ENCODE measurements at regions of chr9 and their contacts with region 1.

Region 1: GRCh38 chr9:120985810-120986222 is 59.2 kb upstream of the TRAF1 start:
- DNase-seq: no peak
- H3K4me3 Mint-ChIP-seq: no peak overlapping the region
- H3K27ac Mint-ChIP-seq: no peak overlapping the region
- H3K4me1 Mint-ChIP-seq: peaks cover 2% of the 10 kb centered on the region
- H3K27me3 Mint-ChIP-seq: peaks cover 5% of the 10 kb centered on the region

Region 2: GRCh38 chr9:120965344-120966012 is 20.3 kb before region 1 on chr9:
- CTCF ChIA-PET with region 1: interaction called, 10 read pairs
- POLR2A ChIA-PET with region 1: interaction called, 3 read pairs
- DNase-seq: no peak
- H3K4me3 Mint-ChIP-seq: no peak overlapping the region
- H3K27ac Mint-ChIP-seq: no peak overlapping the region
- H3K4me1 Mint-ChIP-seq: no peaks in the 10 kb centered on the region
- H3K27me3 Mint-ChIP-seq: peaks cover 8% of the 10 kb centered on the region

Region 3: DNA sequence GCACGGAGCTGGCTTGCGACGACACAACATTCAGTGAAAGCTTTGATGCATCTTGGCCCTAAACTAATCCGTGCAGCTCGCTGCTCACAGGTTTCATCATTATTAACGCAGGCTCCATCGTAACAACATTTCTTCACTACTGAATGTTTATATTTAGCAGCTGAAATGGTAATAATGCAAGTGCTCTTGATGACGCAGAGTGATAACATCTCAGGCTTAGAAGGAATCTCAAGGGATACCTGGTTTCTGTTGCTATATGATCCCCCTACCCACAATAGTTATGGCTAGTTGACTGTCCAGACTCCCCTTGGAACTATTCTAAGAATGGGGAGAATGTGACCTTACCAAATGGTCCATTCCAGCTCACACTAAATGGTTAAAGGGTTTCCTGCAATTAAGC is 28.1 kb after region 1 on chr9:
- CTCF ChIA-PET with region 1: no interaction called
- POLR2A ChIA-PET with region 1: no interaction called
- DNase-seq: no peak
- H3K4me3 Mint-ChIP-seq: no peak overlapping the region
- H3K27ac Mint-ChIP-seq: no peak overlapping the region
- H3K4me1 Mint-ChIP-seq: no peaks in the 10 kb centered on the region
- H3K27me3 Mint-ChIP-seq: no peaks in the 10 kb centered on the region

Region 4: GRCh38 chr9:121048618-121049017 is 62.8 kb after region 1 on chr9:
- CTCF ChIA-PET with region 1: no interaction called
- POLR2A ChIA-PET with region 1: no interaction called
- DNase-seq: no peak
- H3K4me3 Mint-ChIP-seq: no peak overlapping the region
- H3K27ac Mint-ChIP-seq: no peak overlapping the region
- H3K4me1 Mint-ChIP-seq: no peaks in the 10 kb centered on the region
- H3K27me3 Mint-ChIP-seq: no peaks in the 10 kb centered on the region

Region 5: DNA sequence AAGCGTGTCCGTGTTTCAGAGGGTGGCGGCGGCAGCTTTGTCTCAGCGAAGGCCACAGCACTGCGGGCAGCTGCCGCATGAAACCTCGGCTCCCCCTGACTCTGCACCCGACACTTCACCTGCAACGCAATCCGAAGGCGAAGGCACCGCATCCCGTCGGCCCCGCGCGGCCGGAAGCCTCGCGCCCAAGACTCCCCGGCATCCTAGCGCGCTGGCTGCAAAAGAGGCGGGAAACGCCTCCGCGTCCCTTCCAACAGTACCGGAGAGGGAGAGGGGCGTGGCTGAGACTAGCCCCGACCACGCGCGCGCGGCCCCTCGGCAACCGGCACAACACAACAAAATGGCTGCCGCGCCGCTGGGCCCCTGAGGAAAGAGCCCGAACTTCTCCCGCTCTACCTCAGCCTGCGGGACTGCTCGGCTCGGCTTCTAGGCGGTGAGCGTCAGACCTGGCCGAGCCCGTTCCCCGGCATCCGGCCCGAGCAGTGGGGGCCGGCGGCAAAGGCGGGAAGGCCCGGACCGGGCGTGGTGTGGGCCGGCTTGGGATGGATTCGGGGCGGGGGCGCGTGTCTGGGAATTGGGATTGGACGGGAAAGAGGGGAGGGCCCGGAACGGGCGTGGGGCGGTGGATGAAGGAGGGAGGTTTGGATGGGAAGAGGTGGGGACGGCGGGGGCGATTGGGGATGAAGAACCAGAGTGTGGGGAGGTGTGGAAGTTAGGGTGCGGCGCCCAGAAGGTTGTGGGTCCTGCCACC is 89.0 kb after region 1 on chr9 and contains the start of gene CNTRL:
- CTCF ChIA-PET with region 1: interaction called, 17 read pairs
- POLR2A ChIA-PET with region 1: no interaction called
- DNase-seq: peak; percentile 93
- H3K4me3 Mint-ChIP-seq: peak within 1 kb of the TSS; percentile 96
- H3K27ac Mint-ChIP-seq: peak within 1 kb of the TSS; percentile 91
- H3K4me1 Mint-ChIP-seq: peaks cover 53% of the 10 kb centered on the region
- H3K27me3 Mint-ChIP-seq: no peaks in the 10 kb centered on the region
- total RNA-seq, gene CNTRL: 84.1 to 86.9 TPM

Region 6: GRCh38 chr9:121196389-121196788 is 210.6 kb after region 1 on chr9:
- CTCF ChIA-PET with region 1: no interaction called
- POLR2A ChIA-PET with region 1: no interaction called
- DNase-seq: no peak
- H3K4me3 Mint-ChIP-seq: no peak overlapping the region
- H3K27ac Mint-ChIP-seq: no peak overlapping the region
- H3K4me1 Mint-ChIP-seq: peaks cover 73% of the 10 kb centered on the region
- H3K27me3 Mint-ChIP-seq: no peaks in the 10 kb centered on the region

Region 7: GRCh38 chr9:121299467-121300234 is 313.8 kb after region 1 on chr9:
- CTCF ChIA-PET with region 1: no interaction called
- POLR2A ChIA-PET with region 1: no interaction called
- DNase-seq: no peak
- H3K4me3 Mint-ChIP-seq: peak overlapping the region; percentile 60
- H3K27ac Mint-ChIP-seq: no peak overlapping the region
- H3K4me1 Mint-ChIP-seq: peaks cover 16% of the 10 kb centered on the region
- H3K27me3 Mint-ChIP-seq: peaks cover 20% of the 10 kb centered on the region

Measured in activated CD4-positive, alpha-beta memory T cell treated with anti-CD3 and anti-CD28 coated beads, Interleukin-2, amount 10 ng/mL, durations not matched to agents 7 days and 5 days (primary cell).